Spleen (tissue), 13 donors: ENCODE measurements at regions of chr1 and their contacts with region 1.

Region 1: GRCh38 chr1:10430216-10431069 is at the start of gene CENPS:
- DNase-seq: peak; percentile 98
- H3K4me3 ChIP-seq: peak within 1 kb of the TSS; percentile 72 to 96 (median 88)
- H3K27ac ChIP-seq: peak within 1 kb of the TSS; percentile 52 to 87 (median 72)
- H3K4me1 ChIP-seq: peaks cover 6 to 54% (median 28%) of the 10 kb centered on the region in 6 donors
- H3K27me3 ChIP-seq: no peaks in the 10 kb centered on the region
- CTCF ChIP-seq: peak; percentile 92 to 99 (median 97)
- POLR2A ChIP-seq: peak in 1 of 3 donors; percentile 88
- total RNA-seq, gene CENPS: 2.1 to 9.6 (median 6.2) TPM

Region 2: DNA sequence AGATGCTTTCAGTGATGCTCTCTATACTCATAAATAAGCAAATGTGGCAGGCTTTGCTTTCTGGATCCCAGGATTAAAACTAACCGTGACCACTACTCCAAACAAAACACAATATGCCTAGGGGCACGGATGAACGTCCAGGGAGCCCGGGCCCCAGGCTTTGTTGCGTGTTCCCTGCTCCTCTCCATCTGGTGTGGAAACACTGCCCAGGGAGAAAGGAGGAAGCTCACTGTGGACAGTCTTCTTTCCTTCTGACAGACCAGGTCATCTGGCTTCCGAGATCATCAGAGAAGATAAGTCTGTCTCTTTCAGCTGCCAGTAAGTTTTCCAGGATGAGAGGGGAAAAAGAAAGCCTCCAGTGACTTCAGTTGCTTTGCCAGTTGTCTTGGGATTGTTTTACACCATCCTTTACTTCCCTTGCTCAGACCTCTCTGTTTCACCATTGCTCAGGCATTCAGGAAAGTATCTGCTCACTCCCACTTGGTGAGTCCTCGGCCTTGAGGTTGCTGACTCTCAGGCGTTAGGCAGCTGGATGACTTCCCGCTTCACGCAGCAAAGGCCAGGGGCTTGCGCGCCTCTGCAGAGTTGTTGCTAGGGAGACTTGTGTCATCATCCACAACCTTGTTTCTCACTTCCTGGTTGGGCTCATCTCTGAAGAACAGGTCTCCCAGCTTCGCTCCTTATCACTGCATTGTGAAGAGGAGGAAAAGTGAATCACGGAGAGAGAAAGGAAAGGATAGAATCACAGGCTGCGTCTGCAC is 52.2 kb before region 1 on chr1:
- intact Hi-C with region 1: loop called (anchors 5 kb)
- DNase-seq: peak; percentile 88
- H3K4me3 ChIP-seq: peak overlapping the region in 1 of 8 donors; percentile 14
- H3K27ac ChIP-seq: peak overlapping the region in 7 of 8 donors; percentile 68 to 84 (median 81)
- H3K4me1 ChIP-seq: peaks cover 0 to 31% (median 15%) of the 10 kb centered on the region in 6 donors
- H3K27me3 ChIP-seq: no peaks in the 10 kb centered on the region
- CTCF ChIP-seq: no peak
- POLR2A ChIP-seq: no peak

Region 3: DNA sequence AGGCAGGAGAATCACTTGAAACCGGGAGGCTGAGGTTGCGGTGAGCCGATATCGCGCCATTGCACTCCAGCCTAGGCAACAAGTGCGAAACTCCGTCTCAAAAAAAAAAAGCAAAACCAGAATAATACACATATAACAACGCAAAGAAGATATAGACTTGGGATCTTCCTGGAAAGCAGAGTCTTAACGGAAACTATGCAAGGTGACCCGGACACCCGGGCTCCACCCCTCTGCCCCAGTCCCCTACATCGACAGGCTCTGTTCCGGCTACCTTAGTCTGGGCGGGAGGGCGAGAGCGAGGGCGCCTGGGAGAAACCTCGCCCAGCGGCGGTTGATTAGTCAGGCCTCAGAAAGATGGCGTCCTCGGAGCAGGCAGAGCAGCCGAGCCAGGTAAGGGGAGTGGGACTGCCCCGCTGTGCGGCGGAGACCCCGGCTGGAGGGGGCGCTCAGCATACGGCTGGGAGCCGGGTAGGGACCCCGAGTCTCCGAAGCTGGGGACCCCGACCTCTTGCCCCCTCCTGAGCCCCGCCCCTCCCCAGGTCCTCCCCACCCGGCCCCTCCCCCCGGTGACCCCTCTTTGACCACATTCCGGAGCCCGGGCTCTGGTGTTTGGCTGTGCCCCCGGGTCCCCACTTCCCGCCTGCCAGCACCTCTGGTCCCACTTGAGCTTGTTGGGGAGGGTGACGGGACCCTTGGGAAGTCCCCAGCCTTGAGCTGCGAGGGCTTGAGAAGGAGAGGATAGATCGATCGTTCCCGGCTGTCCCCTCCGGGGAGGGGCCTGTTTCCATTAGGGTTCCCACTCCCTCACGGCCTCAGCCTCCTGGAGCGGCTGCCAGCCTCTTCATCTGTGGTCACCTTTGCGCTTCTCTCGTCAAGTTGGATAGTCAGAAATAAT is 44.4 kb after region 1 on chr1 and contains the start of gene PEX14:
- intact Hi-C with region 1: loop called (anchors 5 kb)
- DNase-seq: peak; percentile 96
- H3K4me3 ChIP-seq: peak within 1 kb of the TSS; percentile 85 to 99 (median 94)
- H3K27ac ChIP-seq: peak within 1 kb of the TSS; percentile 69 to 94 (median 89)
- H3K4me1 ChIP-seq: peaks cover 28 to 83% (median 51%) of the 10 kb centered on the region in 6 donors
- H3K27me3 ChIP-seq: no peaks in the 10 kb centered on the region
- CTCF ChIP-seq: no peak
- POLR2A ChIP-seq: peak in 1 of 3 donors; percentile 27
- total RNA-seq, gene PEX14: 9.9 to 19.7 (median 13.8) TPM

Region 4: DNA sequence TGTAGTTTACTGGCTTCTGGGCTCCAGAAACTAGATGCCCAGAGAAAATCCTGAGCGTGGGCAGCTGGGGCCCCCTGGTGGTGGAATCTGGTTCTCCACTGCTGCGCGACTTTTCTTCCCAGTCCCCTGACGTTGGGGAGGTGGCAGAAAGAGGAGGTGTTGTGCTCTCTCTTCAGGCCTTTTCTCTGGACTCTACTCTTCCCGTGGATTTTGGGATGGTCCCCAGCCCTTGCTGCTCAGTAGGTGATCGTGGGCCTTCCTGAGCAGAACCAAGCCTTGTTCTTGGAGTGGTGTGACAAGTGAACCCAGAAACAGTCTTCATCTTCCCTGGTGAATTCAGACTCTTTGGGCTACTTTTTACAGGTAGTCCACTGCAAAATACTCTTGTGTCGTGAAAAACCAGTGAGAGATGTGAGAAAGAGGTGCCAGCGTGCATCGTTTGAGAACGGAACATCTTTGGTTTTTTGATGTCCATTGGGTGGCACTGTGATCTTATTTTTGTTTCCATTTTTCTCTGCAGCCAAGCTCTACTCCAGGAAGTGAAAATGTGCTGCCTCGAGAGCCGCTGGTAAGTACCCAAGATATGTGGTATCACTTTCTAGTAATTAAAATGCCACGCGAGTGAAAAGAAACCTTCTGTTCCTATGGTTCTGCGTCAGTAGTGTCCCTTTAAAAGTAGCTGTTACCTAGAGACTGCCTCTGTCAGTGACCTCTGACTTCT is 64.5 kb after region 1 on chr1:
- intact Hi-C with region 1: loop called (anchors 5 kb)
- DNase-seq: peak; percentile 93
- H3K4me3 ChIP-seq: peak overlapping the region in 6 of 8 donors; percentile 27 to 62 (median 36)
- H3K27ac ChIP-seq: peak overlapping the region; percentile 17 to 83 (median 78)
- H3K4me1 ChIP-seq: peaks cover 12 to 35% (median 20%) of the 10 kb centered on the region in 6 donors
- H3K27me3 ChIP-seq: no peaks in the 10 kb centered on the region
- CTCF ChIP-seq: peak; percentile 72 to 96 (median 88)
- POLR2A ChIP-seq: no peak